Lower leg skin (tissue), 4 donors: ENCODE measurements at regions of chr4 and their contacts with region 1.

Region 1: GRCh38 chr4:85084380-85085094 is 118.0 kb upstream of the WDFY3 start:
- DNase-seq: peak in 1 of 2 donors; percentile 43
- H3K4me3 ChIP-seq: no peak overlapping the region
- CTCF ChIP-seq: no peak
- POLR2A ChIP-seq: no peak

Region 2: DNA sequence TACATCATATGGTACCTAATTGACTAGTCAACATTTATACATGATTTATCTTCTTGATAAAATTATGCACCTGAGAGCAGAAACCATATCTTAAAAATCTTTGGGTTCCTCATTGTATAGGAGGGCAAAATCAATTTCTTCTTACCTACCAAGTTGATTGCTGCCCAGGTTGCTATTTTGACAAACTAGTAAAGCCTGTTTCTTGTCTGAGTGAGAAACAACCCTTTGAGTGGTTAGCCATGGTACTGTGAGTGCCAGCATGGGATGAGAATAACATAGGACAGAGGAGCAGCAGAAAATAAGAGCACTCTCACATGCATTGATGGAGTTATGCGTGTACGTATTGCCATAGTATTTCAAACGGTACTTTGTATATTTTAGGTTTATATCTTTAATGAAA is 250.8 kb after region 1 on chr4:
- intact Hi-C with region 1: no loop called
- DNase-seq: no peak
- H3K4me3 ChIP-seq: no peak overlapping the region
- CTCF ChIP-seq: no peak
- POLR2A ChIP-seq: no peak

Region 3: DNA sequence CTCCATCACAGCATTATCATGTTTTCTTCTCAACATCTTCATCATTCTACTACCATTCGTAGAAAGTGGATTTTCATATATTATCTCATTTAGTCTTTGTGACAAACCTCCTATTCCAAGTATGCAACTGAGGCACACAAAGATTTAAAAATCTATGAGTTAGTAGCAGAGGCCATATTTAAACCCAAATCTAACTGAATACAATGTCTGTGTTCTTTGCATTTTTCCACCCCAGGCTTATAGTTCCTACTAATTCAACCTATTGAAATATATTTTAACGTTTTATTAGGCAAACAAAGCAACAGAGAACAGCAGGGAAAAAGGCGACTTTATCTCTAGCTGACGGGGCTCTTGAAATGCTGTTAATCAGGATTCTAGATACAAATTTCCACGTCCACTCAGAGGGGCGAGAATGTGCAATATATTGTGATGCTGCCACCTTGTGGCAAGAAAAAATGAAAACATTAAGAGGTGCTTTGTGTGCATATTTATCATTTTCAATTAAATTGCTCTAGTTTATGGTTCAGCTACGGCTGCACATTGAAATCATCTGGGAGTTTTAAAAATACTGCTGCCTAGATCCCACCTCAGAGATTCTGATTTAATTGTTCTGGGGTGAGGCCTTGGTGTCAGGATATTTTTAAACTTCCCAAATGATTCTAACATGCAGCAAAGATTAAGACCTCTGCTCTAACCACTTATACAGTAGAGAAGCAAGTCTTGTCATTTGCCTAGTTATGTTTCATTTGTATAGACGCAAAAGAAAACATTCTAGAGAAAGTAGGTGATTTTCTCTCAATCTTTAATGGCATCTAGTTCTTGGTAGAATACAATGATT is 959.4 kb after region 1 on chr4:
- intact Hi-C with region 1: loop called (anchors 10 kb)
- DNase-seq: no peak
- H3K4me3 ChIP-seq: no peak overlapping the region
- CTCF ChIP-seq: no peak
- POLR2A ChIP-seq: no peak